Aorta (tissue), 5 donors: ENCODE measurements at regions of chr16 and their contacts with region 1.

Region 1: GRCh38 chr16:70685938-70686375 is at the start of gene MTSS2:
- DNase-seq: peak; percentile 91 to 97
- ATAC-seq: peak; percentile 79
- H3K4me3 ChIP-seq: peak within 1 kb of the TSS; percentile 63 to 90
- H3K27ac ChIP-seq: peak within 1 kb of the TSS; percentile 29 to 92
- H3K4me1 ChIP-seq: no peaks in the 10 kb centered on the region
- H3K27me3 ChIP-seq: no peaks in the 10 kb centered on the region
- total RNA-seq, gene MTSS2: 65.7 to 87.4 TPM

Region 2: GRCh38 chr16:70725912-70726828 is 40.2 kb after region 1 on chr16:
- intact Hi-C with region 1: no loop called
- DNase-seq: peak in 1 of 2 donors; percentile 76
- ATAC-seq: peak; percentile 73
- H3K4me3 ChIP-seq: no peak overlapping the region
- H3K27ac ChIP-seq: peak overlapping the region in 1 of 2 donors; percentile 18
- H3K4me1 ChIP-seq: no peaks in the 10 kb centered on the region
- H3K27me3 ChIP-seq: no peaks in the 10 kb centered on the region

Region 3: DNA sequence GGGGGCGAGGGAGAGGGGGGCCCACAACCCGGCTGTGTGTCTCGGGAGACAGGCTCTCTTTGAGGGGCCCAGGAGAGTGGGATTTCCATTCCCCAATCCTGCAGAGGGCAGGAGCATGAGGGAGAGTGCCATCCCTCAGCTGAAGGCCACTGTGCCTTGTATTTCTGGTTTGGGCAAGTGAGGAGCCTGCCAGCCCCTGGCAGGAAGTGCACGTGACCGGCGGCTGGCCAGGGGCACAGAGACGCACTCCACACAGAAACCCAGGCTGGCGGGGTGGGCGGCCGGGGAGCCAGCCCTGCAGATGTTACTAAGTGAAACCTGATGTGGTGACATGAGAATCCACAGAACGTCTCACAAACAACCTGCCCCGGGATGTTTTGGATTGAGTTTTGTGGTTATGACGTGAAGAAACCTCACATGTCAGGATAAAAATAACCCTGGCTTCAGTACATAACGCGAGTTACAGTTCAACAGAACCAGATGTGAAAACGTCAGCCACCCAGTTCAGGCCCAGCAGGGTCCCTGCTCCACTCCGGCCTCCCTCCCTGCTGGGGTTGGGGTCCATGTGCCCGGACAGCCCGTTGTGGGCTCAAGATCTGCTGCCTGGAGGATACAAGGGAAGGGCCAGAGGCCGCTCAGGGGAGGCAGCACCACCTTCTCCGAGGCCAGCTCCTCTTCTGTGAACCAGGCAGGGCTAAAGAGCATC is 51.6 kb after region 1 on chr16:
- intact Hi-C with region 1: loop called (anchors 2 to 5 kb)
- DNase-seq: peak in 1 of 2 donors; percentile 87
- ATAC-seq: peak; percentile 69
- H3K4me3 ChIP-seq: no peak overlapping the region
- H3K27ac ChIP-seq: peak overlapping the region; percentile 16 to 91
- H3K4me1 ChIP-seq: no peaks in the 10 kb centered on the region
- H3K27me3 ChIP-seq: no peaks in the 10 kb centered on the region